Right cardiac atrium (tissue), 5 donors: ENCODE measurements at regions of chr11 and their contacts with region 1.

Region 1: GRCh38 chr11:33329705-33330329 is 72.6 kb downstream of the HIPK3 start:
- DNase-seq: peak in 1 of 3 donors; percentile 22
- ATAC-seq: peak; percentile 69 to 81
- H3K4me3 ChIP-seq: no peak overlapping the region
- H3K27ac ChIP-seq: no peak overlapping the region
- H3K4me1 ChIP-seq: peaks cover 11% of the 10 kb centered on the region
- H3K27me3 ChIP-seq: no peaks in the 10 kb centered on the region

Region 2: DNA sequence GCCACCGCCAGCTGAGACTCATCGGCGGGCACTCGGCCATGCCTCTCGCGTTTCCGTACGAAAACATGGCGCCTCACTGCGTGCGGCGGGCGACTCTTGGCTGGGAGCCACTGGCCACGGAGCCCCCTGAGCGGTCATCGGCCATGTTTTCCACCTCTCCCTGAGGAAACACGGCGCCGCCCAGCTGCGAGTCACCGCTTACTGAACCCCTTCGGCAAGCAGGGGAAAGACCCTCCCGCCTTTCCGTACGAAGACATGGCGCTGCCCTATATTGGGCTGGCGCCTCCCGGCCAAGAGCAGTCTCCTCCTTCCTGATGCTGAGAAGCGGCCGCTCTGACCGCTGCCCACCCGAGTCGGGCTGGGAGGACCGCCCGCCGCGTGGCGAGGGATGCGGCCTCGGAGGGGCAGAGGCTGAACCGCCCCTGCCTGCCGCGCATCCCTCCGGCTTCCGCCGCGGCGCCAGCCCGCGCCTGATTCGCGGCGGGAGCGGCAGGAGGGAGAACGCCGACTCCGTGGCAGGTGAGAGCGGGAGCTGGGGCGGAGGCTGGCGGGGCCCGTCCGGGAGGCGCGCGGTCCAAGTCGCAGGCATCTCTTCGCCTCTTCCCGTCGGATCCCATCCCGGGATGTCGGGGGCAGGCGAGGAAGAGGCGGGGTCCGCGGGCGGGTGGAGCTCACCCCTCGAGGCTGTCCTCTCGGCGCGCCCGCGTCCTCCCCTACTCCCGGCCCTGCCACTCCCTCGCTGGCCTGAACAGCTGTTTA is 290.4 kb before region 1 on chr11 and contains the start of gene TCP11L1:
- intact Hi-C with region 1: loop called in 1 of 4 experiments (anchors 10 kb)
- DNase-seq: peak; percentile 94 to 98 (median 95)
- ATAC-seq: peak; percentile 96 to 97
- H3K4me3 ChIP-seq: peak within 1 kb of the TSS; percentile 78
- H3K27ac ChIP-seq: peak within 1 kb of the TSS; percentile 97
- H3K4me1 ChIP-seq: no peaks in the 10 kb centered on the region
- H3K27me3 ChIP-seq: no peaks in the 10 kb centered on the region
- total RNA-seq, gene TCP11L1: 8.2 to 9.8 (median 8.8) TPM

Region 3: GRCh38 chr11:33161120-33162005 is 168.5 kb before region 1 on chr11 and contains the start of gene CSTF3:
- intact Hi-C with region 1: loop called in 3 of 4 experiments (anchors 5 to 10 kb)
- DNase-seq: peak; percentile 100
- ATAC-seq: peak; percentile 100
- H3K4me3 ChIP-seq: peak within 1 kb of the TSS; percentile 100
- H3K27ac ChIP-seq: peak within 1 kb of the TSS; percentile 89
- H3K4me1 ChIP-seq: peaks cover 2% of the 10 kb centered on the region
- H3K27me3 ChIP-seq: no peaks in the 10 kb centered on the region
- total RNA-seq, gene CSTF3: 11.2 to 18.2 (median 13.2) TPM

Region 4: GRCh38 chr11:33168709-33169200 is 161.1 kb before region 1 on chr11:
- intact Hi-C with region 1: loop called in 3 of 4 experiments (anchors 5 to 10 kb)
- DNase-seq: no peak
- ATAC-seq: peak in 1 of 2 donors; percentile 68
- H3K4me3 ChIP-seq: no peak overlapping the region
- H3K27ac ChIP-seq: no peak overlapping the region
- H3K4me1 ChIP-seq: peaks cover 3% of the 10 kb centered on the region
- H3K27me3 ChIP-seq: no peaks in the 10 kb centered on the region

Region 5: GRCh38 chr11:33234397-33235190 is 95.2 kb before region 1 on chr11:
- intact Hi-C with region 1: no loop called
- DNase-seq: no peak
- ATAC-seq: peak in 1 of 2 donors; percentile 32
- H3K4me3 ChIP-seq: no peak overlapping the region
- H3K27ac ChIP-seq: peak overlapping the region; percentile 37
- H3K4me1 ChIP-seq: peaks cover 1% of the 10 kb centered on the region
- H3K27me3 ChIP-seq: no peaks in the 10 kb centered on the region

Region 6: DNA sequence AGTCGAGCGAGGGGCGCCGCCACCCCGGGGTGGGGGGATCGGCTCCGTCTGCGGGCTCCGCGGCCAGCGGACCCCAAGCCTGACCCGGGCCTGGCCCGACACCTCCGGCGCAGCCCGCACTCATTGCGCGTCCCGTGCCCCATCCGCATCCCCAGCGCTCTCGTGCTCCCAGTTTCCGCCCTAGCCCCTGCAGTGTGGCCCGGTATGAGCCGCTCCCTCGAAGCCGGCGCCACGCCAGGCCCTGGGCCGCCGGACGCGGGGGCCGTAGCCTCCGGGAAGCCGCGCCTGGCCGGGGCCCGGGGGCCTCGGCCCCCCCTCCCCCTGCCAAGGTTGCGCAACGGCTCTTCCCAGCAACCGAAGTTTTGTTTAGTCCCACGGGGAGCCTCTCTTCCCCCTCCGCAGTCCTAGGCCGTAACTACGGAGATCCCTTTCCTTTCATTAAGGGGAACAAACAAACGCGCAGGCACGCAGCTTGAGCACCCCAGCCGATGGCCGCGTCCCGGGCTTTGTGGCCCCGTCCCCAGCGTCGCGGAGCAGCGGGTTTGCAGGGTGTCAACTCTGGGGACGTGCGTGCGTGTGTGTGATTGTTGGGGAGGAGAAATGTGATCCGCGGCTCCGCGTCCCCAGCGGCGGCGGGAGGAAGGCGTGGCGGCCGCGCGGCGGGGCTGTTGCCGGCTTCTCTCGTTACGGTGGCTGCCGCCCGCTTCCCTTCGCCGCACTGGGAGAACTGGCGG is 71.8 kb before region 1 on chr11:
- intact Hi-C with region 1: loop called in 3 of 4 experiments (anchors 5 kb)
- DNase-seq: peak; percentile 92 to 96 (median 96)
- ATAC-seq: peak; percentile 93 to 95
- H3K4me3 ChIP-seq: peak overlapping the region; percentile 90
- H3K27ac ChIP-seq: peak overlapping the region; percentile 100
- H3K4me1 ChIP-seq: peaks cover 2% of the 10 kb centered on the region
- H3K27me3 ChIP-seq: no peaks in the 10 kb centered on the region

Region 7: DNA sequence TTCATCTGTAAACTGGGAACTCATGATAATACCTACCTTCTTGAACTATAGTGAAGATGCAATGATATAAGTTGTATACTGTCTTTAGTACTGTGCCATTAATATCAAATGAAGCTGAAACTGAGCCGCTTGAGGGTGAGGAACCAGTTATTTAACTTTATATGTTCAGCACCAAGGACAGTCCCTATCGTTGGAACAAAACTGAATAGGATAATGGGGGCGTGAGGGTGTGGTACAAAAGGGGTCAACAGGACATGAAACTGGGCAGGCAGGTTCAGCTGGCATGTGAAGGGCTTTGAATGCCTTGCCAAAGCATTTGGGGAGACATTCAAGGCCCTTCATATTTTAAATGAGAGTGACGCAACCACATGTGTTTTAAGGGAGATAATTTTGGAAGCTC is 258.3 kb after region 1 on chr11:
- intact Hi-C with region 1: no loop called
- DNase-seq: no peak
- ATAC-seq: no peak
- H3K4me3 ChIP-seq: no peak overlapping the region
- H3K27ac ChIP-seq: no peak overlapping the region
- H3K4me1 ChIP-seq: no peaks in the 10 kb centered on the region
- H3K27me3 ChIP-seq: no peaks in the 10 kb centered on the region